Activated CD4-positive, alpha-beta T cell treated with anti-CD3 and anti-CD28 coated beads, Interleukin-2, amount 10 ng/mL, durations not matched to agents 24 days and 14 days (primary cell): ENCODE measurements at regions of chr3 and their contacts with region 1.

Region 1: GRCh38 chr3:120095226-120095978 is 1.2 kb upstream of the GSK3B start:
- DNase-seq: peak; percentile 97
- H3K4me3 Mint-ChIP-seq: no peak overlapping the region
- H3K27ac Mint-ChIP-seq: no peak overlapping the region
- H3K4me1 Mint-ChIP-seq: peaks cover 15% of the 10 kb centered on the region
- H3K27me3 Mint-ChIP-seq: no peaks in the 10 kb centered on the region

Region 2: GRCh38 chr3:119463171-119464169 is 631.9 kb before region 1 on chr3 and contains the start of gene TMEM39A:
- intact Hi-C with region 1: loop called (anchors 1 kb)
- DNase-seq: peak; percentile 100
- H3K4me3 Mint-ChIP-seq: peak within 1 kb of the TSS; percentile 99
- H3K27ac Mint-ChIP-seq: peak within 1 kb of the TSS; percentile 96
- H3K4me1 Mint-ChIP-seq: peaks cover 30% of the 10 kb centered on the region
- H3K27me3 Mint-ChIP-seq: peaks cover 2% of the 10 kb centered on the region
- total RNA-seq, gene TMEM39A: 44.0 and 52.2 TPM in 2 replicates

Region 3: DNA sequence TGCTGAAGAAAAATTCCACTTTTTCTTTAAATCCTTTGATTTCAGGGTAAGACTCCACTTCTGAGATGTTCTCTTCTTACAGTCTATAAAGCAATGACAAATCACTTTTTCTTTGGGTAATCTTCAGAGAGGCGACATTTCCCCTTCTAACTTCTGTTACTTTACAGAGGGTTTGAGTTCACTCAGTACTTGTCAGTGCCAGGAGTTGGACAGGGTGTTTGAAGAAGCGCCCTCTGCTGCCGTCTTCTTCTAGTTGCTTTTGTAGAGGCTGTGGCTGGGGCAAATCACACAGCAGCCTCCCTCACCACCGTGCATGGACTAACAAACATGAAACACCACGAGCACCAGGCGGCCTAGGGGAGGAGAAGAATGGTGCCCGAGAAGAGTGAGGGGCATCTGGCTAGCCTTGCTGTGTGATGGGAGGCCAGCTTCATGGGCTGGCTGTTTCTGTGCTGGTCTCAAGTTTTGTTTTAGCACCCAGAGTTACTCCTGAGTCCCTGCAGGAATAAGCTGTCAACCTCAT is 535.9 kb before region 1 on chr3 and contains the start of gene CD80:
- intact Hi-C with region 1: loop called (anchors 10 kb)
- DNase-seq: peak; percentile 92
- H3K4me3 Mint-ChIP-seq: peak within 1 kb of the TSS; percentile 80
- H3K27ac Mint-ChIP-seq: peak within 1 kb of the TSS; percentile 77
- H3K4me1 Mint-ChIP-seq: peaks cover 53% of the 10 kb centered on the region
- H3K27me3 Mint-ChIP-seq: no peaks in the 10 kb centered on the region
- total RNA-seq, gene CD80: 12.5 and 13.0 TPM in 2 replicates

Region 4: DNA sequence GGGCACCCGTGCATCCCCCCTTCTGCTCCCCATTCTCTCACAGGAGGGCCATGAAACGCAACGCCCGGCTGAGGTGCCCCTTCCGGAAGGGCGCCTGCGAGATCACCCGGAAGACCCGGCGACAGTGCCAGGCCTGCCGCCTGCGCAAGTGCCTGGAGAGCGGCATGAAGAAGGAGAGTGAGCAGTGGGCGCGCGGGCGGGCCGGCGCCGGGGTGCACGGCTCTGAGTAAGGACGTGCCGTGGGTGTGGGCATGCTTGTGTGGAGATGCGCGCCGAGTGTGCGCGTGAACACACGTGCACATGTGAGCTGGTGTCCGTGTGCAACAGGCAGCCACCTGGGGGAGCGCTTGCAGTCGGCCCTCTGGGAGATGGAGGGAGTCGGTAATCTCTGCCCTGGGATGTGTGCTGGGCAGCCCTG is 285.4 kb before region 1 on chr3:
- intact Hi-C with region 1: loop called (anchors 5 kb)
- DNase-seq: peak; percentile 79
- H3K4me3 Mint-ChIP-seq: peak overlapping the region; percentile 79
- H3K27ac Mint-ChIP-seq: peak overlapping the region; percentile 64
- H3K4me1 Mint-ChIP-seq: peaks cover 7% of the 10 kb centered on the region
- H3K27me3 Mint-ChIP-seq: peaks cover 6% of the 10 kb centered on the region

Region 5: DNA sequence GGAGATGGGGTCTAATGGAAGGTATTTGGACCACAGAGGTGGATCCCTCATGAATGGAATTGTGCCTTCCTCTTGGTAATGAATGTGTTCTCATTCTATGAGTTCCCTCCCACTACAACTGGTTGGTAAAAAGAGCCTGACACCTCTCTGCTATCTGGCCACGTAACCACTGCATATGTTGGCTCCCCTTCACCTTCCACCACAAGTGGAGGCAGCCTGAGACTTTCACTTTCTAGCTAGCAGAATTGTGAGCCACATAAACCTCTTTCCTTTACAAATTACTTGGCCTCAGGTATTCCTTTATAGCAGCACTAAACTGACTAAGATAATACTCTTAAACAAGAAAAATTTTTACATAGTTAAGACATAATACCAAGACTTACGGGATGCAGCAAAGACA is 158.2 kb before region 1 on chr3:
- intact Hi-C with region 1: loop called (anchors 1 kb)
- DNase-seq: peak; percentile 84
- H3K4me3 Mint-ChIP-seq: peak overlapping the region; percentile 60
- H3K27ac Mint-ChIP-seq: peak overlapping the region; percentile 54
- H3K4me1 Mint-ChIP-seq: peaks cover 24% of the 10 kb centered on the region
- H3K27me3 Mint-ChIP-seq: peaks cover 2% of the 10 kb centered on the region

Region 6: DNA sequence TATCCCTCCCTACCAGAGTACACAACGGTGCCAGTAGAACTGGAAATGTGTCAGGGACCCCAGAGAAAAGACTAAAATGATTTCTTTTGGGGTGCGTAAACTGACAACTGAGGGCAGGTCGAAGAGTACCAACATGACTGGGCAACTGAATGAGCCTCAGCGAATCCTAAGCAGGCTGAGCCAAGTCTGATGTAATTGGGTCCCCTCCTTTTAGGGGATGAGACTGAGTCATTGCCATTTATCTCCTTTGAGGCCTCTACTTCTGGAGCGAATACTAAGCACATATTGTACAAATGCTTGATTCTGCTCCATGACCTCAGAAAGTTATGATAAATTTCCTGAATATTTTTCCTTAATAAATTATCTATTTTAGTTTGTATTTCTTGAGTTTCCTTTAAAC is 207.0 kb after region 1 on chr3:
- intact Hi-C with region 1: no loop called
- DNase-seq: no peak
- H3K4me3 Mint-ChIP-seq: no peak overlapping the region
- H3K27ac Mint-ChIP-seq: no peak overlapping the region
- H3K4me1 Mint-ChIP-seq: no peaks in the 10 kb centered on the region
- H3K27me3 Mint-ChIP-seq: peaks cover 7% of the 10 kb centered on the region

Region 7: DNA sequence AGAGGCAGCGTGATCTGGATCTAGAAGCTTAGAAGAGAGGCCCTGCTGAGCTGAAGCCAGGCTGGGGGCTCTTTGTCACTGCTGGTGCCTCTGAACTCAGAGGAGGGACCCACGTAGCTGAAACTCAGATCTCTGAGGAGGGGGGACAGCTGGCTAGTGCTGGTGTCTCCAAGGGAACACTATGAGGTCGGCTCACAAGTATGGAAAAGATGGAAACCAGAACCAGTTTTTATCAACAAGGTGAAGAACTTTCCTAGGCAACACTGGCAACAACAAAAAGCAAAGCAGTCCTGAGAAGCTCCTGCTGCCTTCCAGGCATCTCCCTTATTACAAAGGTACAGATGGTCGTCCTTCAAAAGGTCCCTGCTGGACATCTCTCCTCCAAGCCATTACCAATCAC is 382.4 kb after region 1 on chr3:
- intact Hi-C with region 1: no loop called
- DNase-seq: no peak
- H3K4me3 Mint-ChIP-seq: no peak overlapping the region
- H3K27ac Mint-ChIP-seq: no peak overlapping the region
- H3K4me1 Mint-ChIP-seq: no peaks in the 10 kb centered on the region
- H3K27me3 Mint-ChIP-seq: peaks cover 3% of the 10 kb centered on the region

Region 8: DNA sequence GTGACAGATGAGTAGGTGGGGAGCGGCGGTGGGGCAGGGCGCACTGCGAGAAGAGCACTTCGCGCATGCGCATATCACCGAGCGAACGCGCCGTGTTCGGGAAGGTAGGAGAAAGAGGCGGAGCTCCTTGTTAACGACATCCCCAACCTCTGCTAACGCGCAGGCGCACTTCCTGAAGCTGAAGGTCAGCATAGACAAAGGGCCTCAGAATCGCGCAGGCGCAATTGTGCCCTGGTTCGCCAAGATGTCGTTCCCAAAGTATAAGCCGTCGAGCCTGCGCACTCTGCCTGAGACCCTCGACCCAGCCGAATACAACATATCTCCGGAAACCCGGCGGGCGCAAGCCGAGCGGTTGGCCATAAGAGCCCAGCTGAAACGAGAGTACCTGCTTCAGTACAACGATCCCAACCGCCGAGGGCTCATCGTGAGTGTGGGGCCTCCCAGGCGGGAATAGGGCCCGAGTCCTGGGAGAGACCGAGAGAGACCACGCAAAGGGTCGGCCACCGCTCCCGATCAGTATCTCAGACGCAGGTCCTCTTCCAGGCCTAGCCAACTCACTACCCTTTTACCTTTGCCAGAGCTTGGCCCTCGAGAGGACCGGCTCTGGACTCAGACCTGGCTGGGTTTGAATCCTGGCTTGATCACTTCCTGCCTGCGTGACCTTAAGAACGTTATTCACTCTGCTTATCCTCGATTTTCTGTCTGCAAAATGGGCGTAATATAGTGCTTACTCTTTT is 500.9 kb after region 1 on chr3 and contains the start of gene NDUFB4:
- intact Hi-C with region 1: loop called (anchors 2 kb)
- DNase-seq: peak; percentile 98
- H3K4me3 Mint-ChIP-seq: peak within 1 kb of the TSS; percentile 91
- H3K27ac Mint-ChIP-seq: peak within 1 kb of the TSS; percentile 94
- H3K4me1 Mint-ChIP-seq: peaks cover 15% of the 10 kb centered on the region
- H3K27me3 Mint-ChIP-seq: peaks cover 14% of the 10 kb centered on the region
- total RNA-seq, gene NDUFB4: 116 and 123 TPM in 2 replicates